ENCODE measurements at regions of chr4 and their contacts with region 1.

Region 1: GRCh38 chr4:187598196-187598595 is 397.4 kb upstream of the ZFP42 start:
- DNase-seq: no peak

Region 2: GRCh38 chr4:187172340-187172761 is 425.8 kb before region 1 on chr4:
- intact Hi-C with region 1: loop called in 1 of 2 experiments (anchors 10 kb)
- DNase-seq: no peak

Region 3: GRCh38 chr4:187436251-187436650 is 161.9 kb before region 1 on chr4:
- intact Hi-C with region 1: no loop called
- DNase-seq: no peak

Region 4: DNA sequence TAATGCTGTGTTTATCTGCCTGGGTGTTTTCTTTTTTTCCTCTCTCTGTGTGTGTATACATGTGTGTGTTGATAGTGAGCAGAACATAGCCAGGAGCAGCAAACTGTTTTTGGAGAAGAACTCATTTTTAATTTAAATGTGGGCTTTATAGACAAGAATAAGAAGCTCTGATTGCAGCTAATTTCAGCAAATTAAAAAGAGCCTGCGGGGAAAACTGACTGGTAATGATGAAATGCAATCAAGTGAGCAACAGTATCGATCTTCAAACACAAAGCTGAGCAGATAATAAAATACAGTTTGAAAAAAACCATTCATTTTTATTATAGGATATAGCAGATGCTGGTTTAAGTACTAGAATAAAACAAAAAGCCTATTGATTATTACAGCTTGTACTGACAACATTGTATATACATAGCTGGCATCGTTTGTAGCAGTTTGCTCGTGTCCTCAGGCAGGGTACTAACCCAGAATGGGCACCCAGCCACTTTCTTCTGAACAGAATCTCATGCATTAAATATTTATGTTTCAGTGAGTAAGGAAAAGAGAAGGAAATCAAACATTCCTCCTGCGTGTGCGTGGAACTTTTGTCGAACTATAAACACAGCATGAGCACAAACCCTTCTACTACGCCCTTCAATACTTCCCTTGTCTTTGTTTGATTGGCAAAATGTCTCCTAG is 323.9 kb after region 1 on chr4:
- intact Hi-C with region 1: no loop called
- DNase-seq: no peak